ENCODE measurements at regions of chr12 and their contacts with region 1.

Region 1: DNA sequence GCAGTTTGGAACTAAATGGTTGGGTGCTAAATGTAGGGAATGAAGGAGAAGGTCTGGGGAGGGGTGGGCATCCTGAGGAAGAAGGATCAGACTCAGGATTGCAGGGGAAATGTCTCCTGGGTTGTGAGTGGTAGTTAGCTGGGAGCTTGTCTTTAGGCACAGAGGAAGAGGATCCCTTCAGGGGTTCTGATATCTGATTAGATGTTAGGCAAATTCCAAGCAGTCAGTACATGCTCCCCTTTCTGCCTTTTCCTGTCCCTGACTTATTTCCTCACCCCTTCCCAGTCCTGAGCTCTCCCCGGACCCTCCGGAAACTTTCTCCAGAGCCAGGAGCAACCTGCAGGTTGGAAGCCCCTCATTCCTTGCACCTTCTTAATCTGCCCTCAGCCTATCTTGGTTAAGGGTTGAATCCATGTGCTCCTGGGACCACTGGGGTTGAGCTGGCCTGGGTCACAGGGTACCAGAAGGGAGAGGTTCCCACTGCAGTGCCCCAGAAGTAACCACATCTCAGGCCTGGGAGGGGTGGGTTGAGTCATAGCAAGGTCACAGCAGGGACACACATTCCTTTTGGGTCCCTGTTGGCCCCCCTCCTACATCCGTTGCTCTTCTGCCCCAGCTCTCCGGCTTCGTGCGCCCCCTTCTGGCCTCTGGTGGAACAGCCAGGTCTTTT is 1.6 kb downstream of the IGFBP6 start:
- DNase-seq: peak; percentile 86
- H3K4me3 ChIP-seq: peak overlapping the region; percentile 77
- H3K27ac ChIP-seq: peak overlapping the region; percentile 91
- H3K27me3 ChIP-seq: no peaks in the 10 kb centered on the region
- CTCF ChIP-seq: peak; percentile 99

Region 2: DNA sequence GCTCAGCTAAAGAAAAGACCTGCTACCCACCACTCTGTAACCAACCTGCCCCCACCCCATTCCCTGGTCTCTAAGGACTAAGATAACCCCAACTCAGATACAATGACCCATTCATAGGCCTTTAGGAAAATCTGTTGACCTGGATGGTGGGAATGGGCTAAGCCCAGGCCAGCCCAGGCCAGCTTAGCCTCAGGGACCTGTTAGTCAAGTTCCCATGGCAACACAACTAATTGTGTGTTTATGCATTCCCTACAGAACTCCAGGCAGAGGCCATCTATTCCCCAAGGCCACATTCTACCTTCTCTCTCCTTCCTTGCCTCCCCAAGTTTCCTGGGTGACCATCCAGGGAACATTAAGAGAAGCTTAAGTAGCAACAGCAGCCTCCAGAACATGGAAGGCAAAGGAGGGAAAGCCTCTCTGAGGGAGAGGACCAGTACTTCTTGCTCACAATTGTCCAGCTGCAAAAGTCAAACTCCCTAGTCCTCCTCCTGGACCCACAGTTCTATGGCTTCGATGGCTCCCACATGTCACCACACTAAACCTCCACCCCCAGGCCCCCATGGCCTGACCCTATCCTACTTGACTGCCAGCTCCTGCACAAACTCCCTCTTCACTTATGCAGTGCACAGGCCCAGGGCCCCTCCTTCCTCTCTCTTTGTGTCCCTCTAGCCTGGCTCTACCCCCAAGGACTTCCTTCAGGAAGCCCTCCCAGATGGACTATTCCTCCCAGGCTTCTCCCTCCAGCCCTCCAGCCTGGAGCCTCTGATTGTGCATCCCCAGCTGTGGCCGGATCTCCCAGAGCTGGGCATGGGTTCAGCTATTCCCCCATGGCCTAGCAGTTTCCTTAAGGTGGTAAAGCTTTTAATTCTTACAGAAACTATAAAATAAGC is 177.9 kb before region 1 on chr12:
- CTCF ChIA-PET with region 1: no interaction called
- POLR2A ChIA-PET with region 1: no interaction called
- DNase-seq: no peak
- H3K4me3 ChIP-seq: no peak overlapping the region
- H3K27ac ChIP-seq: no peak overlapping the region
- H3K27me3 ChIP-seq: no peaks in the 10 kb centered on the region
- CTCF ChIP-seq: no peak

Region 3: GRCh38 chr12:53054112-53054833 is 44.8 kb before region 1 on chr12:
- CTCF ChIA-PET with region 1: interaction called, 10 read pairs
- POLR2A ChIA-PET with region 1: interaction called, 3 read pairs
- DNase-seq: no peak
- H3K4me3 ChIP-seq: peak overlapping the region; percentile 47
- H3K27ac ChIP-seq: peak overlapping the region; percentile 47
- H3K27me3 ChIP-seq: no peaks in the 10 kb centered on the region
- CTCF ChIP-seq: no peak

Region 4: DNA sequence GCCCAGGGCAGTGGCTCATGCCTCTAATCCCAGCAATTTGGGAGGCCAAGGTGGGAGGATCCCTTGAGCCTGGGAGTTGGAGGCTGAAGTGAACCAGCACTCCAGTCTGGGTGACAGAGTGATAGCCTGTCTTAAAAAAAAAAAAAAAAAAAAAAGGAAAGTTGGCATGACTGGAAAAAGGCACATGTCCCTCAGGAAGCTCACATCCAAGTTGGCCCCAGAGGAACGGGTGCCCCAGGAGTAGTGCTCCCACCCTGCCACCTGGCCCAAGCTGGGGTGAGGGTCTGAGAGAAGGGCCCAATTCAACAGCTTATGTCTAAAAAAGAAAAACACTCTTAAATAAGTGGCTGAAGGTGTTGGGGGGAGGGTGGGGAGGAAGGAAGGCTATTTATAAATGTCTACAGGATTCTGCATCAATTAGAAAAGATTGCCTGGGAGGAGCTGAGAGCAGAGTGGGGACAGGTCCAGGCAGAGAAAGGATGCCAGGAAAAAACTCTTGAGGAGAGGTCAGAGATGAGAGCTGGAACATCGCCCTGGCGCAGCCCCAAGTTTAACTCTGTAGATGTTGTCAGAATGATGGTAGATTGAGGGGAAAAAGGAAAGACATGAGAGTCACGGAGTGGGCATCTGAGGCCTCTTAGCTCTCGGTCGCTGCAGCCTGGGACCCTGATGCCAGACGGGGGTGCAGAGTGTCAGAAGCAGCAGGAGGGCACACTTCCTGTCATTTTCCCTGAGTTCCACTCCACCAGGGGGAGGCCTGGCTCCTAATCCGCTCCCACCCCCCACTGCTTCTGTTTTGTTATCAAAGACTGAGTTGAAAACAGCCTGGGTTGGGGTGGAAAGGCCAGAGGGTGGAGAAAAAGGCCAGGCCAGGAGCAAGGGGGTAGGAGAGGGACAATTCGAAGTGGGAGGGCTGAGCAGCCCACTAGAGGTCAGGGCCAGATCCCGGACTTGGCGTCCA is 27.2 kb before region 1 on chr12:
- CTCF ChIA-PET with region 1: interaction called, 120 read pairs
- POLR2A ChIA-PET with region 1: interaction called, 15 read pairs
- DNase-seq: no peak
- H3K4me3 ChIP-seq: no peak overlapping the region
- H3K27ac ChIP-seq: peak overlapping the region; percentile 11
- H3K27me3 ChIP-seq: no peaks in the 10 kb centered on the region
- CTCF ChIP-seq: peak; percentile 50

Region 5: DNA sequence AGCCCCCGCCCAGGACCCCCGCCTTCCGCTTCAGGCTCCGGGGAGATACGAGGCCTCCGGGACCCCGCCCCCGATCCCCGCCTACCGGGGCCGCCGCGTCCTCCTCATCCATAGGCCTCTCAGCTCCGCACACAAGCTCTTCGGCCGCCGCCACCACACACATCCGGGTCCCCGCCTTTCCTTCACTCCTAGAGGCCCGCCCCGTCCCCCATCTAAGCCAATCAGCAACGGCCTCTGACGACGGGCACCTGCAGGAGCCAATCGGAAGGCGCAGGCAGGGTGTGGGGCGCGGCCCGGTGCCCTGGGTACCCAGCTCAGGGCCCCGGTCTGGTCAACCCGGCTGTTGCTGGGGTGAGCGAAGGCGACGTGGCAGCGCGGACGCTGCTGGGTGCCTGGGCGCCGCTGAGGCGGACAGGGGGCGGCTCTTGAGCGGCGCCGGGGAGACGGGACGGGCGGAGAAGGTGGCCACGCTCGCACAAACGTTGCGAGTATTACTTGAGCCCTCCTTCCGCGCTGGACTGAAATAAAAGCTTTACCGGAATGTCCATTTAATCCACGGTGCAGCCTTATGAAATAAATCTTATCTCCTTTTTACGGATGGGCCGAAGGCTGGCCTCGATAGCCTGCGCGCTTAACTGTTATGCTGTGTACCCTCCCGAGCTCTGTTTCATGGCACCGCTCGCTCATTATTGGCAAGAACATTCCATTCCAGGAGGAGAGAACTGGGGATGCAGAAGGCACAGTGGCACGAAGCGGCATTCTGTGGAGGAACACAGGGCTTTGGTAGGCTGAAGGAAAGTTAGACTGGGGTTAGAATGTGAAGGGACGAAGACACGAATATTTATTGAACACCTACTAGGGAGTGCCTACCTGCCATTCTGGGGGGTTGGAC is 19.6 kb before region 1 on chr12 and contains the start of gene SPRYD3:
- CTCF ChIA-PET with region 1: interaction called, 29 read pairs
- POLR2A ChIA-PET with region 1: interaction called, 64 read pairs
- DNase-seq: peak; percentile 94
- H3K4me3 ChIP-seq: peak within 1 kb of the TSS; percentile 69
- H3K27ac ChIP-seq: peak within 1 kb of the TSS; percentile 97
- H3K27me3 ChIP-seq: no peaks in the 10 kb centered on the region
- CTCF ChIP-seq: no peak
- polyA plus RNA-seq, gene SPRYD3: 15.4 and 17.6 TPM in 2 replicates

Region 6: GRCh38 chr12:53086361-53086760 is 12.8 kb before region 1 on chr12:
- CTCF ChIA-PET with region 1: interaction called, 29 read pairs
- POLR2A ChIA-PET with region 1: no interaction called
- DNase-seq: no peak
- H3K4me3 ChIP-seq: no peak overlapping the region
- H3K27ac ChIP-seq: no peak overlapping the region
- H3K27me3 ChIP-seq: no peaks in the 10 kb centered on the region
- CTCF ChIP-seq: no peak

Measured in AG04450 (cell line).